Dorsolateral prefrontal cortex (tissue), 120 donors: ENCODE measurements at regions of chr2 and their contacts with region 1.

Region 1: DNA sequence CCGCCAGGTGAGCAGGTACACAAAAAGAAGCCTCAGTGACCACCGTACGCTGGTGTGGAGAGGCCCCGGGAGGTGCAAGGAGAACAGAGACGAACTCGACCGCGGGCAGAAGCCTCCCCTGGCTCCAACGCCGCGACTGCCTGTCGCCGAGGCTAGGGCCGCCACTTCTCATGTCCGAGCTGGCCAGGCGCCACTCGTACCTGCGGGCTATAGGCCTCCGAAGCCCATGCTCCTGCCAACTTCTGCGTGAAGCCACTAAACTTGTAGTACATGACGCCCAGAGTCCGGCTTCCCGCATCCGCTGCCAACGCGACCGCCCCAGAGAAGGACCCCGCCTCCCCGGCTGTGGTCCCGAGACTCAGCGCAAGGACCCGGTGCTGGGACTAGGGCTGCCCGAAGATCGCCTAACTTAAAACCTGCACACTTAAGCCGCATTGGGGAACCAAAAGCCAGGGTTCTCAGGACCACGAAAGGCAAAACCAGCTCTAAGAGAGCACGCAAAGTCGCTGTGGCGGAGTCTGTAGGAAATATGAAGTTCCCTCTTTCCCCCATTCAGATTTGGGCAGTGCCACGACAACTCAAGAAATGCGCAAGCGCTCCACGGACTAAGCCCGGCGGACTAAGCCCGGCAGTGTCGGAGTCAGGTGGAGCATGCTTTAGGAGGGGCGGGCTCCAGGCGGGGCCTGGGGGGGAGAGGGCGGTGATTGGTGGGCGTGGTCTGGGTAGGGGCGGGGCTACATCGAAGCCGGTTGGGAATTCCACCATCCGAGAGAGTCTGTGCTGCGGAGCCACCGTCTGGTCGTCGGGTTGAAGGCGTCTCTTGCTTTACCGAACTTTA is at the start of gene COX7A2L:
- DNase-seq: peak; percentile 95 to 99 (median 97)
- H3K4me3 ChIP-seq: peak within 1 kb of the TSS; percentile 63 to 100 (median 98)
- H3K27ac ChIP-seq: peak within 1 kb of the TSS; percentile 80 to 100 (median 96)
- H3K27me3 ChIP-seq: no peaks in the 10 kb centered on the region
- CTCF ChIP-seq: peak in 51 of 56 donors; percentile 22 to 72 (median 53)
- total RNA-seq, gene COX7A2L: 60.5 to 159 (median 113) TPM

Region 2: DNA sequence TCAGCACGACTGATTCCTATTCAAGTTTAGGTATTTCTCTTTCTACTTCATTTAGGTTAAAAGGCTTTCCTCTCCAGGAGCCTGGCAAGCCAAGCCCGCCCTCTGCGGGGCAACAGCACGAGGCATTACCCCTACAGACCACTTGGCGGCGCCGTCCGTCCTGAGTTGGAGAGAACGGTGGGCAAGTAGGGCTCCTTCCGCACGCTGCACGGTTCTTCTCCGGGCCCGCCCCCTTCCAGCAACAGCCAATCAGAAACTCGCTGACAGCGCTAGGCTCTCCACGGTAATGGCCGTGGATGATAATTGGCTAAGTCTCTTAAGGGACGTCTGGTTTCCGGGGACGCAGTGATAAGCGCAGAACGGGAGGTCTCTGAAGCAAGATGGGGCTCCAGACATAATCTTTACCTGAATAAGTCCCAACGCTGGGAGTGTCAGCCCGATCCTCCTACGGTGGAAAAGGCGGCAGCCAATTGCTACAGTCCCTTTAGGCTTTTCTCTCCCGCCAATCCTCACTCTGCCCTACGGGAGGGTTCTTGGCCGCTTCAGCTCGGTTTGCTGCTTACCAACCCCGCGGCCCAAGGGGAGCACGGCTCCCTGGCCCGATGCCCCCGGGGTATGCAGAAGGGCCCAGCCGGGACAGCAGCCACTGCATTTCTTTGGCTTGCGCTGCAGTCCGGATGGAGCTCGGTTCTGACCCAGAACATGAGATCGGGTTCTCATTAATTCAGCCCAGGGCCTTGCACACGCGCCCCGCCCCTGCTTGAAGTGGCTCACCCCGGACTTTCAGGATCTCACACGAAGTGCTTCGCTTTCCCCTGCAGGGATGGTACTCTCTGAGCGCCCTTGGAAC is 520.2 kb before region 1 on chr2:
- intact Hi-C with region 1: loop called (anchors 2 to 5 kb)
- DNase-seq: peak; percentile 84 to 99 (median 97)
- H3K4me3 ChIP-seq: peak overlapping the region; percentile 51 to 98 (median 82)
- H3K27ac ChIP-seq: peak overlapping the region in 58 of 59 donors; percentile 20 to 96 (median 89)
- H3K27me3 ChIP-seq: peaks cover 0 to 4% (median 0%) of the 10 kb centered on the region in 45 donors
- CTCF ChIP-seq: peak; percentile 95 to 100 (median 99)

Region 3: GRCh38 chr2:41879235-41879916 is 481.7 kb before region 1 on chr2:
- intact Hi-C with region 1: loop called in 1 of 2 experiments (anchors 5 kb)
- DNase-seq: peak in 3 of 10 donors; percentile 23 to 68 (median 53)
- H3K4me3 ChIP-seq: peak overlapping the region in 2 of 59 donors; percentile 22 to 28
- H3K27ac ChIP-seq: peak overlapping the region in 50 of 59 donors; percentile 5 to 93 (median 62)
- H3K27me3 ChIP-seq: no peaks in the 10 kb centered on the region
- CTCF ChIP-seq: peak in 1 of 56 donors; percentile 13

Region 4: GRCh38 chr2:42095923-42096408 is 265.1 kb before region 1 on chr2:
- intact Hi-C with region 1: loop called (anchors 2 to 5 kb)
- DNase-seq: peak in 9 of 10 donors; percentile 64 to 91 (median 75)
- H3K4me3 ChIP-seq: no peak overlapping the region
- H3K27ac ChIP-seq: peak overlapping the region in 1 of 59 donors; percentile 19
- H3K27me3 ChIP-seq: no peaks in the 10 kb centered on the region
- CTCF ChIP-seq: peak; percentile 82 to 98 (median 91)

Region 5: DNA sequence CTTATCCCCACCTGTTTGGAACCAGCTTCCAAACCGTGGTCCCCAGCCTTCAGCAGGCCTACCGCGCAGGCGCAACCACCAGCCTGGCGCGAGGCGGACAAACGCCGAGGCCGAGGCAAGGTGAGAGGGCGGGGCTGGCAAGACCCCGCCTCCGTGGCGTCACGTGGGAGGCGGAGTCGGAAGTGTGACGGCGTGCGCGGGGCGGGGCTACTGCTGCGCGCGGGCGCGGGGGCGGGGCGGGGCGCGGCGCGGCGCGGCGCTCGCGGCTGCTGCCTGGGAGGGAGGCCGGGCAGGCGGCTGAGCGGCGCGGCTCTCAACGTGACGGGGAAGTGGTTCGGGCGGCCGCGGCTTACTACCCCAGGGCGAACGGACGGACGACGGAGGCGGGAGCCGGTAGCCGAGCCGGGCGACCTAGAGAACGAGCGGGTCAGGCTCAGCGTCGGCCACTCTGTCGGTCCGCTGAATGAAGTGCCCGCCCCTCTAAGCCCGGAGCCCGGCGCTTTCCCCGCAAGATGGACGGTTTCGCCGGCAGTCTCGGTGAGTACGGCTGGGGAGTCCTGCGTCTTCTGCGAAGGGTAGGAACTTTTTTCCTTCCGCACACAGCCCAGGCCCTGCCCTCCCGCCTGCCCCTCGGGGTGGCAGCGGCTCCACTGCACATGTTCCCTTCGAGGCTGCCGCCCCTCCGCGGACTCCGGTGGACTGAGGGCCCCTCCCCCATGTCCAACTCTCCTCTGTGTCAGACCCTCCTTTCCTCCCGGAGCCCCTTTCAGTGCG is 191.8 kb before region 1 on chr2 and contains the start of gene EML4:
- intact Hi-C with region 1: loop called in 1 of 2 experiments (anchors 2 kb)
- DNase-seq: peak; percentile 84 to 96 (median 92)
- H3K4me3 ChIP-seq: peak within 1 kb of the TSS; percentile 59 to 97 (median 88)
- H3K27ac ChIP-seq: peak within 1 kb of the TSS in 58 of 59 donors; percentile 28 to 92 (median 76)
- H3K27me3 ChIP-seq: no peaks in the 10 kb centered on the region
- CTCF ChIP-seq: peak in 2 of 56 donors; percentile 11 to 14
- total RNA-seq, gene EML4: 14.0 to 28.7 (median 20.0) TPM

Region 6: GRCh38 chr2:42494355-42495233 is 133.5 kb after region 1 on chr2:
- intact Hi-C with region 1: loop called (anchors 2 to 5 kb)
- DNase-seq: peak; percentile 46 to 77 (median 68)
- H3K4me3 ChIP-seq: peak overlapping the region; percentile 44 to 85 (median 65)
- H3K27ac ChIP-seq: peak overlapping the region in 40 of 59 donors; percentile 8 to 75 (median 48)
- H3K27me3 ChIP-seq: peaks cover 0 to 35% (median 11%) of the 10 kb centered on the region in 45 donors
- CTCF ChIP-seq: peak; percentile 66 to 94 (median 85)

Region 7: GRCh38 chr2:42554392-42554791 is 193.3 kb after region 1 on chr2:
- intact Hi-C with region 1: no loop called
- DNase-seq: no peak
- H3K4me3 ChIP-seq: no peak overlapping the region
- H3K27ac ChIP-seq: no peak overlapping the region
- H3K27me3 ChIP-seq: no peaks in the 10 kb centered on the region
- CTCF ChIP-seq: no peak

Region 8: DNA sequence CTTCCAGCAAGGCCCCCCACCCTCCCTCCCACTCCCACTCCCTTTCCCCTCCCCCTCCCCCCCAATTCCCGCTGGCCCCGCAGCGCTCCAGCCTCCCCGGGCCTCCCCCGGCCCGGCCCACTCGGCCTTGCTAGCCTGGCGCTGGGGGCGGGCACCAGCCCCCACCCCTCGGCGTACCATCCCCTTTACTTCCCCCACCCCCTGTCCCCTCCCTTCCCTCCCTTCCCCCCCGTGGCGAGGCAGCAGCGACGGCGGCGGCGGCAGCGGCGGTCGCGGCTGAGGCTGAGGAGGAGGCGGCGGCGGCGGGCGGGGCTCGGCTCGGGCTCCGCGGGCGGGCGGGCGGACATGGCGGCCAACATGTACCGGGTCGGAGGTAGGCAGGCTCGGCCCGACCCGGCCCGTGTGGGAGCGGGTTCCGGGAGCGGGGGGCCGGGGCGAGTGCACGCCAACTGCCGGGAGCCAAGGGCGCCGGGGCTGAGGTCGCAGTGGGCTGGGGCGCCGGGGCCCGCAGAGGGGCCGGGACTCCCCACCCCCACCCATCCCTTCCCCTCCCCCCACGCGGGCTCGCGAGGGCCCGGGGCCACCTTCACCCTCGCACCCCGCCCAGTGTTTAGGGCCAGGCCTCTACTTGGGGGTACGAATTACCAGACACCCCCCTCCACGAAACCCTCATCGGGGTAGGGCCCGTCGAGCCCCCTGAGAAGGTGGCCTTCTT is 207.4 kb after region 1 on chr2 and contains the start of gene MTA3:
- intact Hi-C with region 1: loop called in 1 of 2 experiments (anchors 10 kb)
- DNase-seq: peak in 9 of 10 donors; percentile 31 to 81 (median 63)
- H3K4me3 ChIP-seq: peak within 1 kb of the TSS; percentile 56 to 97 (median 82)
- H3K27ac ChIP-seq: peak within 1 kb of the TSS; percentile 53 to 95 (median 87)
- H3K27me3 ChIP-seq: no peaks in the 10 kb centered on the region
- CTCF ChIP-seq: no peak
- total RNA-seq, gene MTA3: 45.5 to 111 (median 79.6) TPM